ENCODE measurements at regions of chr3 and their contacts with region 1.

Region 1: DNA sequence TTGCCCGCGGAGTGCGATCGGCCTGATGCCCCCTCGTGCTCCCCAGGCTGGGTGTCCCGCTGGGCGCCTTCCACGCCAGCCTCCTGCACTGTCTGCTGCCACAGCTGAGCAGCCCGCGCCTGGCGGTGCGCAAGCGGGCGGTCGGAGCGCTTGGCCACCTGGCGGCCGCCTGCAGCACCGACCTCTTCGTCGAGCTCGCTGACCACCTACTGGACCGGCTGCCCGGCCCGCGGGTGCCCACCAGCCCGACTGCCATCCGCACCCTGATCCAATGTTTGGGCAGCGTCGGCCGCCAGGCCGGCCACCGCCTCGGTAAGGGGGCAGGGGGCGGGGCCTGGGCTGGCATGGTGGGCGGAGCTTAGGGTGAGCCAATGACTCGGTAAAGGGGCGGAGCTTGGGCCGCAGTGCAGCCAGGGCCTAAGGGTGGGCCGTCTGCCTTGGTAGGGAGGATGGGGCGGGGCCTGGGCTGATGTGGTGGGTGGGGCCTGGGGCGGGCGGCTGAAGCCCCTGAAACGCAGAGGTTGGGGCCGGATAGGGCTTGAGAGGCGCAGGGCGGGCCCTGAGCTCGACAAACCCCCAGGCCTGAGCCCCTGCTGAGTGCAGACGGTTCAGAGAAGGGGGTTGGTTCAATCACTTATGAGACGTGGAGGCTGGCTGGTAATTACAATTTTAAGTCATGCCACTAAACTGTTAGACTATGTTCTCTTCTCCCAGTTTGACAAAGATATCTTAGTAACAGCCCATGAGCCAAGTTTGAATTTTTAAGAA is 13.7 kb downstream of the CAND2 start:
- DNase-seq: peak; percentile 96
- ATAC-seq: peak; percentile 100
- H3K4me3 ChIP-seq: peak overlapping the region in 4 of 5 experiments; percentile 45 to 69 (median 61)
- H3K4me3 Mint-ChIP-seq: peak overlapping the region; percentile 81
- H3K27ac ChIP-seq: no peak overlapping the region
- H3K27ac Mint-ChIP-seq: peak overlapping the region; percentile 32
- H3K4me1 ChIP-seq: peaks cover 7 to 14% of the 10 kb centered on the region in 2 donors
- H3K4me1 Mint-ChIP-seq: peaks cover 8% of the 10 kb centered on the region
- H3K27me3 ChIP-seq: no peaks in the 10 kb centered on the region
- H3K27me3 Mint-ChIP-seq: no peaks in the 10 kb centered on the region
- CTCF ChIP-seq: peak; percentile 92

Region 2: DNA sequence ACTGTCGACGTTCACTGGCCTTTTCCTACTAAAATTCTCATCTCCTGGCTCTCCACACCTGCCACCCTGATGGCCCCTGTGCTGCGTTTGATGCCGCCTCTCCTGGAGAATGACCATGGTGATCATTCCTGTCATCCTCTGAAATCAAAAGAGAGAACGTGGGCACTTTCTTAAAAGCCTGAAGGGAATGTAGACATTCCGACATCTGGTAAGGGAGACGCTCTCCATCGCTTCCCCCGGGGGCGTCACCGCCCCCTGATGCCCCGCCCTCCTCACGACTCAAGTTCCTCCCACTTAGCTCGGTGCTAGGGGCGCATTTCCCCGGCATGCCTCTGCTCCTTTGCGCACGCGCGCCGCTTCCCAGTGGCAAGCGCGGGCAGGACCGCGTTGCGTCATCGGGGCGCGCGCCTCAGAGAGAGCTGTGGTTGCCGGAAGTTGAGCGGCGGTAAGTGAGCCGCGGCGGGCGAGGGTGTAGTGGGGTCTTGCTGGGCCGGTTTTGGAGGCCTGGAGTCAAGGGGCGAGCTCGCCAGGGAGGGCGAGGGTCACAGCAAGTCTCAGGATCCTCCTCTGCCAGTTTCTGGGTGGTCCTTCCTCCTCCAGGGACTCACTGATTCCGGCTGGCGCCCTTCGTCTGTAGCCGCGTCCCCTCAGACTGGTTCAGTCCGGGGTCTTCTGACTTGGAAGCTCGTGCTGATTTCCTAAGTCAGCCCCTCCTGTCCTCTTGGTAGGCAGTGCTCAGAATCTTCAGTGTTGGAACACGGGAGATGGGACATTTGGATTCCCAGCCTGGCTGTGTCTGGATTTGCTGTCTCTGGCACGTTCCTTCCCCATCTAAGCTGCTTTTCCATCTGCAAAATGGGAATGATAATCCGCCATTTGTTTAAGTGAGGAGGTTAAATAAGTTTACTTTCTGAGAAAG is 1538.0 kb before region 1 on chr3 and contains the start of gene ATG7:
- CTCF ChIA-PET with region 1: no interaction called
- POLR2A ChIA-PET with region 1: no interaction called
- intact Hi-C with region 1: loop called (anchors 5 kb)
- DNase-seq: peak; percentile 98
- ATAC-seq: peak; percentile 98
- H3K4me3 ChIP-seq: peak within 1 kb of the TSS; percentile 94 to 100 (median 99)
- H3K4me3 Mint-ChIP-seq: peak within 1 kb of the TSS; percentile 97
- H3K27ac ChIP-seq: peak within 1 kb of the TSS; percentile 91 to 95
- H3K27ac Mint-ChIP-seq: peak within 1 kb of the TSS; percentile 98
- H3K4me1 ChIP-seq: peaks cover 17 to 20% of the 10 kb centered on the region in 2 donors
- H3K4me1 Mint-ChIP-seq: peaks cover 47% of the 10 kb centered on the region
- H3K27me3 ChIP-seq: no peaks in the 10 kb centered on the region
- H3K27me3 Mint-ChIP-seq: peaks cover 2% of the 10 kb centered on the region
- CTCF ChIP-seq: no peak
- total RNA-seq, gene ATG7: 66.4 and 72.7 TPM in 2 replicates

Region 3: DNA sequence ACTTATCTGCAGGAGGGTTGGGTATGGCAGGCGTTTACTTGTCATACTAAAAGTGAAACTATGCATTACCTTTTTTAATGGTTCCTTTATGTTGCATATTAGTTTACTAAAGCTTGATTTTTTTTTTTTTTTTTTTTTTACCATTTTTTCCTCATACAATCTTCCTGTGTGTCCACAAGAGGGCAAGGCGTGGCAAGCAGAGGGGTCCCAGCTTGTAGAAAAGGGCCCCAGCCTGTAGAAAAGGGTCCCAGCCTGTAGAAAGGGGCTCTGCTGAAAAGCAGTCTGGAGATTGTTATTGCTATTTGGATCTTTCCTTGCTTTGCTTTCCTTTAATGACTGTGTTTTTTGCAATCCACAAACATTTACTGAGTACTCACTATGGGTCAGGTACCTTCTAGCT is 231.5 kb before region 1 on chr3:
- CTCF ChIA-PET with region 1: no interaction called
- POLR2A ChIA-PET with region 1: no interaction called
- intact Hi-C with region 1: no loop called
- DNase-seq: no peak
- ATAC-seq: no peak
- H3K4me3 ChIP-seq: no peak overlapping the region
- H3K4me3 Mint-ChIP-seq: no peak overlapping the region
- H3K27ac ChIP-seq: no peak overlapping the region
- H3K27ac Mint-ChIP-seq: no peak overlapping the region
- H3K4me1 ChIP-seq: peaks cover 3 to 6% of the 10 kb centered on the region in 2 donors
- H3K4me1 Mint-ChIP-seq: peaks cover 5% of the 10 kb centered on the region
- H3K27me3 ChIP-seq: no peaks in the 10 kb centered on the region
- H3K27me3 Mint-ChIP-seq: no peaks in the 10 kb centered on the region
- CTCF ChIP-seq: no peak

Region 4: DNA sequence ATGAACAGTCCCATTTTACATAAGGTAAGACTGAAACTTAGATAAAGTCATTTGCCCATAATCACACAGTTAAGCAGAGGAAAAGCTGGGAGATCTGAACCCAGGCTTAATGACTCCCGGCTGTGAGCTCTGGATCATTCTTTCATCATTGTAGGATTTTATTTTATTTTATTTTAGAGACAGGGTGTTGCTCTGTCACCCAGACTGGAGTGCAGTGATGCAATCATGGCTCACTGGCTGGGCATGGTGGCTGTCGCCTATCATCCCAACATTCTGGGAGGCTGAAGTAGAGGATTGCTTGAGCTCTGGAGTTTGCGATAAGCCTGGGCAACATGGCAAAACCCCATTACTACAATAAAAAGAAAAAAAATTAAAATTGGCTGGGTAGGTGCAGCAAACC is 115.1 kb before region 1 on chr3:
- CTCF ChIA-PET with region 1: no interaction called
- POLR2A ChIA-PET with region 1: no interaction called
- intact Hi-C with region 1: no loop called
- DNase-seq: no peak
- ATAC-seq: no peak
- H3K4me3 ChIP-seq: no peak overlapping the region
- H3K4me3 Mint-ChIP-seq: no peak overlapping the region
- H3K27ac ChIP-seq: no peak overlapping the region
- H3K27ac Mint-ChIP-seq: no peak overlapping the region
- H3K4me1 ChIP-seq: no peaks in the 10 kb centered on the region
- H3K4me1 Mint-ChIP-seq: no peaks in the 10 kb centered on the region
- H3K27me3 ChIP-seq: no peaks in the 10 kb centered on the region
- H3K27me3 Mint-ChIP-seq: no peaks in the 10 kb centered on the region
- CTCF ChIP-seq: no peak

Region 5: GRCh38 chr3:12706504-12707253 is 103.5 kb before region 1 on chr3:
- CTCF ChIA-PET with region 1: interaction called, 17 read pairs
- POLR2A ChIA-PET with region 1: no interaction called
- intact Hi-C with region 1: no loop called
- DNase-seq: peak; percentile 67
- ATAC-seq: peak; percentile 97
- H3K4me3 ChIP-seq: no peak overlapping the region
- H3K4me3 Mint-ChIP-seq: no peak overlapping the region
- H3K27ac ChIP-seq: no peak overlapping the region
- H3K27ac Mint-ChIP-seq: no peak overlapping the region
- H3K4me1 ChIP-seq: no peaks in the 10 kb centered on the region
- H3K4me1 Mint-ChIP-seq: peaks cover 1% of the 10 kb centered on the region
- H3K27me3 ChIP-seq: peaks cover 0 to 7% (median 0%) of the 10 kb centered on the region in 4 experiments
- H3K27me3 Mint-ChIP-seq: peaks cover 8% of the 10 kb centered on the region
- CTCF ChIP-seq: peak; percentile 77

Region 6: GRCh38 chr3:12796171-12797123 is 13.8 kb before region 1 on chr3 and contains the start of gene CAND2:
- CTCF ChIA-PET with region 1: interaction called, 24 read pairs
- POLR2A ChIA-PET with region 1: no interaction called
- intact Hi-C with region 1: loop called (anchors 1 kb)
- DNase-seq: peak; percentile 65
- ATAC-seq: peak; percentile 75
- H3K4me3 ChIP-seq: peak within 1 kb of the TSS; percentile 14 to 78 (median 55)
- H3K4me3 Mint-ChIP-seq: peak within 1 kb of the TSS; percentile 89
- H3K27ac ChIP-seq: no peak within 1 kb of the TSS
- H3K27ac Mint-ChIP-seq: peak within 1 kb of the TSS; percentile 56
- H3K4me1 ChIP-seq: peaks cover 15 to 26% of the 10 kb centered on the region in 2 donors
- H3K4me1 Mint-ChIP-seq: peaks cover 22% of the 10 kb centered on the region
- H3K27me3 ChIP-seq: peaks cover 0 to 14% (median 6%) of the 10 kb centered on the region in 4 experiments
- H3K27me3 Mint-ChIP-seq: peaks cover 12% of the 10 kb centered on the region
- CTCF ChIP-seq: no peak
- total RNA-seq, gene CAND2: 1.00 and 1.9 TPM in 2 replicates

Region 7: GRCh38 chr3:12868039-12869034 is 58.1 kb after region 1 on chr3:
- CTCF ChIA-PET with region 1: no interaction called
- POLR2A ChIA-PET with region 1: interaction called, 5 read pairs
- intact Hi-C with region 1: loop called (anchors 1 kb)
- DNase-seq: peak; percentile 79
- ATAC-seq: peak; percentile 73
- H3K4me3 ChIP-seq: peak overlapping the region; percentile 19 to 59 (median 47)
- H3K4me3 Mint-ChIP-seq: peak overlapping the region; percentile 85
- H3K27ac ChIP-seq: no peak overlapping the region
- H3K27ac Mint-ChIP-seq: peak overlapping the region; percentile 8
- H3K4me1 ChIP-seq: peaks cover 16 to 34% of the 10 kb centered on the region in 2 donors
- H3K4me1 Mint-ChIP-seq: peaks cover 23% of the 10 kb centered on the region
- H3K27me3 ChIP-seq: peaks cover 0 to 23% (median 3%) of the 10 kb centered on the region in 4 experiments
- H3K27me3 Mint-ChIP-seq: peaks cover 9% of the 10 kb centered on the region
- CTCF ChIP-seq: peak; percentile 92

Region 8: DNA sequence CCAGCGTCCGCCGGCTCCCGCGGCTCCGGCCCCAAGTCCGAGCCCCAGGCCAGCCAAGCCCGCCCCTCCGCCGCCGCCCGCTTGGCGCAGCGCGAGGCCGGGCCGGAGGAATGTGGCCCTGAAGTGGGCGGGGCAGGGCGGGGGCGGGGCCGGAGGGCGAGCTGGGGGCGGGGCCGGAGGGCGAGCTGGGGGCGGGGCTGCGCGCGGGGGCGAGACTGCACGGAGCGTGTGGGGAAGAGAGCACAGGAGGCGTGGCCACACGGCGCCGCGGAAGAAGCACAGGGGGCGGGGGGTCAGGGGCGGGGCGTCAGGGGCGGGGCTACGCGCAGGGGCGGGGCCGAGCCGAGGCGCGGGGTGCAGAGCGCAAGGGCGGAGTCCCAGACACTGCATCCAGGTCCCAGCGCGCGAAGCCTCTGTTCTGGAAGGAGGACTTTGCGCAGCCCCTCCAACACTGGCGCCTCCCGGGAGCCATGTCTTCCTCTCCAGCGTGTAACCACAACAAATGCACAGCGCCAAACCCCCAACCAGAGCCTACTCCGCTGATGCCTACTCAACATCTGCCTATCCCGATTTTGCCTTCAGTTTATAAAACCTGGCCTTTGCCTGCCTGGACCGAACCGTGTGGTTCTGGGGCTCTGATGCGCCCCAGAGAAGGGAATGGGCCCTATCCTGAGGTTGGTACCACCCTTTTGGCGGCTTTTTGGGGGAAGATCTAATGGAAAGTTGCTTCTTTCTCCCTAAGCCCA is 157.6 kb after region 1 on chr3:
- CTCF ChIA-PET with region 1: no interaction called
- POLR2A ChIA-PET with region 1: no interaction called
- intact Hi-C with region 1: loop called (anchors 5 kb)
- DNase-seq: peak; percentile 91
- ATAC-seq: peak; percentile 98
- H3K4me3 ChIP-seq: peak overlapping the region in 4 of 5 experiments; percentile 16 to 61 (median 44)
- H3K4me3 Mint-ChIP-seq: peak overlapping the region; percentile 86
- H3K27ac ChIP-seq: peak overlapping the region in 1 of 2 donors; percentile 11
- H3K27ac Mint-ChIP-seq: peak overlapping the region; percentile 85
- H3K4me1 ChIP-seq: peaks cover 55 to 78% of the 10 kb centered on the region in 2 donors
- H3K4me1 Mint-ChIP-seq: peaks cover 77% of the 10 kb centered on the region
- H3K27me3 ChIP-seq: no peaks in the 10 kb centered on the region
- H3K27me3 Mint-ChIP-seq: no peaks in the 10 kb centered on the region
- CTCF ChIP-seq: no peak